ENCODE measurements at regions of chr9 and their contacts with region 1.

Region 1: DNA sequence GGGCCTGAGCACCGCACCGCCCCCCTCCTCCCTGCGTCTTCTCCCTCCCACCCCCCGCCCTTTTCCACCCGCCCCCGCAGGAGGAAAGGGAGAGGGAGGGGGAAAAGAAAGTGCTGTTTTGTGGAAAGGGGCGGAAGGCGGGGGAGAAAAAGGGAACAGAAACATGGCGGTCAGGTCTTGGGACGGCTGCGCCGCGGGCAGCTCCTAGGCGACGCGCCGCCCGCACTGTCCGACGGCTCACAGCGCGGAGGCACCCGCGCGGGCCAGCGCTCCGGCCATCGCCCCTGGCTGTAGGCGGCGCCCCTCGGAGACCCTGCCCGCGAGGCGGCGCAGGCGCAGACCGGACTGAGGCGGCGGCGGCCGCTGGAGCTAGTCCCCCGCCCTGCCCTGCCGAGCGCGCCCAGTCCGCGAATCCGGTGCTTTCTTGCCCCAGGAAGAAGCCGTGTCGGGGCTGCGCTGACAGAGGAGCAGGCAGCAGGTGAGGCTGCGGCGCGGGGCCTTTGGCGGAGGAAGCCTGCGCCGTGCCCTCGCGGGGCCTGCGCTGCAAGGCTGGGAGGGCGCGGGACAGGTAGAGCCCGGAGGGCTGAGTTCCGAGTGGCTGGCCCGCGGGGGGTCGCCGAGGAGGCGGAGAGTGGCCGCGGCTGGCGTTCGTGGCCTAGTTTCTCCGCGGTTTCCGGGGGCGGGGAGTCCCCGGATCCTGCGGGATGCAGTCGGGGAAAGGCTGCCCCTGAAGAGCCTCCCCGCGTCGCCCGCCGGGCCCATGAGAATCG is at the start of gene DENND4C:
- DNase-seq: peak; percentile 85 to 87 (median 85)
- H3K4me3 ChIP-seq: peak within 1 kb of the TSS; percentile 53 to 73
- H3K4me3 Mint-ChIP-seq: peak within 1 kb of the TSS in 6 of 8 donors; percentile 82 to 89 (median 88)
- H3K27ac ChIP-seq: peak within 1 kb of the TSS; percentile 73
- H3K27ac Mint-ChIP-seq: peak within 1 kb of the TSS in 6 of 7 donors; percentile 62 to 93 (median 90)
- H3K4me1 ChIP-seq: peaks cover 25% of the 10 kb centered on the region
- H3K4me1 Mint-ChIP-seq: peaks cover 5 to 11% (median 9%) of the 10 kb centered on the region in 4 donors
- H3K27me3 ChIP-seq: no peaks in the 10 kb centered on the region
- H3K27me3 Mint-ChIP-seq: no peaks in the 10 kb centered on the region
- total RNA-seq, gene DENND4C: 69.0 to 71.8 TPM

Region 2: DNA sequence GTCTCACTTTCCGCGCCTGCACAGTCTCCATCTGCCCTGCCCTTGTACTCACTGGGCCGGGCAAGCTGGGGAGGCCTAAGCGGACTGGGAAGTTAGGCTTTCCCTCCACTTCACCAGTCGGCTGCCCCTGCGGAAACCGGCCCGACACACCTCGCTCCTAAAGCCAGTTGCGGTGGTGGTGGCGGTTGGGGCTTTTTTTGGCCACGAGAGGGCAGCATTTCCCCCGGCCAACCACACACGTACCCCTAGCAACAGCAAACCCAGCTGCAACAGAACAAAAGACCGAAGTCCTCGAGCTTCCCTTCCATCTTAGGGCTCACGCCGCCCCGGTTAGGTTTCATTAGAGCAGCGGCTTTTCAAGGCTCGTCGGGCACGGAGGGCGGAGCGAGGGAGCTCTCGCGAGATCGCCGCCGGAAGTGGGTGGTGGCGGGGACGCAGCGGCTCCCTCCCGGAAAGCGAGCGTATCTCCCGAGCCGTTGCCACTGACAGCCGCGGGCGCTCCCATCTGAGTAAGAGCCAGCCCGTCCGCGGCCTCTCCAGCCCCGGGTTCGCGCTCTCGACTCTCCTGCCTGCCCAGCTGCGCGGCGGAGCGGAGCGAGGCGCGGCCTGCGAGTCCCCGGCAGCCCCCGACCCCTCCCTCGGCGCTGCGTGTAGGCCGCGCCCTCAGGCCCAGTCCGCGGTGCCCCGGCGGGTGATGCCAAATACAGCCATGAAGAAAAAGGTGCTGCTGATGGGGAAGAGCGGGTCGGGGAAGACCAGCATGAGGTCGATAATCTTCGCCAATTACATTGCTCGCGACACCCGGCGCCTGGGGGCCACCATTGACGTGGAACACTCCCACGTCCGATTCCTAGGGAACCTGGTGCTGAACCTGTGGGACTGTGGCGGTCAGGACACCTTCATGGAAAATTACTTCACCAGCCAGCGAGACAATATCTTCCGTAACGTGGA is 181.3 kb before region 1 on chr9 and contains the start of gene RRAGA:
- CTCF ChIA-PET with region 1: interaction called, 3 read pairs
- POLR2A ChIA-PET with region 1: interaction called, 13 read pairs
- intact Hi-C with region 1: loop called (anchors 1 kb)
- DNase-seq: peak; percentile 94 to 96 (median 95)
- H3K4me3 ChIP-seq: peak within 1 kb of the TSS; percentile 84 to 96
- H3K4me3 Mint-ChIP-seq: peak within 1 kb of the TSS; percentile 91 to 99 (median 96)
- H3K27ac ChIP-seq: peak within 1 kb of the TSS; percentile 87
- H3K27ac Mint-ChIP-seq: peak within 1 kb of the TSS; percentile 96 to 100 (median 99)
- H3K4me1 ChIP-seq: peaks cover 39% of the 10 kb centered on the region
- H3K4me1 Mint-ChIP-seq: peaks cover 21 to 56% (median 40%) of the 10 kb centered on the region in 4 donors
- H3K27me3 ChIP-seq: no peaks in the 10 kb centered on the region
- H3K27me3 Mint-ChIP-seq: no peaks in the 10 kb centered on the region
- total RNA-seq, gene RRAGA: 57.4 to 58.0 TPM

Region 3: DNA sequence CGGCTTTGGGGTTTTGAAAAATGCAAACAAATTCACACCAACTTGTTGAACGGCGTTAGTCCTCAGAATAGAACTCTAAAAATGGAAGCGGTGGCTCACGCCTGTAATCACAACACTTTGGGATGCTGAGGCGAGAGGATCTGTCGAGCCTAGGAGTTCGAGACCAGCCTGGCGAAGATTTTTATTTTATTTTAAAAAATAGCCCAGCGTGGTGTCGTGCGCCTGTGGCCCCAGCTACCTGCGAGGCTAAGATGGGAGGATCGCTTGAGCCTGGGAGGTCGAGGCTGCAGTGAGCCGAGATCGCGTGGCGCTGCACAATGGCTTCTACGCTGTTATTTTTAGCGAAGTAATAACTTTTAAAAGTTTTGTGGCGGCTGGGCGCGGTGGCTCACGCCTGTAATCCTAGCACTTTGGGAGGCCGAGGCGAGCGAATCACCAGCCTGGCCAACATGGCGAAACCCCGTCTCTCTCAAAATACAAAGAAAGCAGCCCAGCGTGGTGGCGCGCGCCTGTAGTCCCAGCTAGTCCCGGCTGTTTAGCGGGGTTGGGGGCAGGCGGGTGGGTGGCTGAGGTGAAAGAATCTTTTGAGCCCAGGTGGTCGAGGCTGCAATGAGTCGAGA is 102.5 kb before region 1 on chr9:
- CTCF ChIA-PET with region 1: no interaction called
- POLR2A ChIA-PET with region 1: interaction called, 7 read pairs
- intact Hi-C with region 1: loop called (anchors 1 kb)
- DNase-seq: peak in 3 of 5 donors; percentile 36 to 52 (median 37)
- H3K4me3 ChIP-seq: peak overlapping the region; percentile 57 to 79
- H3K4me3 Mint-ChIP-seq: peak overlapping the region; percentile 92 to 98 (median 96)
- H3K27ac ChIP-seq: peak overlapping the region; percentile 73
- H3K27ac Mint-ChIP-seq: peak overlapping the region; percentile 90 to 96 (median 94)
- H3K4me1 ChIP-seq: peaks cover 61% of the 10 kb centered on the region
- H3K4me1 Mint-ChIP-seq: peaks cover 38 to 63% (median 48%) of the 10 kb centered on the region in 4 donors
- H3K27me3 ChIP-seq: no peaks in the 10 kb centered on the region
- H3K27me3 Mint-ChIP-seq: no peaks in the 10 kb centered on the region

Region 4: DNA sequence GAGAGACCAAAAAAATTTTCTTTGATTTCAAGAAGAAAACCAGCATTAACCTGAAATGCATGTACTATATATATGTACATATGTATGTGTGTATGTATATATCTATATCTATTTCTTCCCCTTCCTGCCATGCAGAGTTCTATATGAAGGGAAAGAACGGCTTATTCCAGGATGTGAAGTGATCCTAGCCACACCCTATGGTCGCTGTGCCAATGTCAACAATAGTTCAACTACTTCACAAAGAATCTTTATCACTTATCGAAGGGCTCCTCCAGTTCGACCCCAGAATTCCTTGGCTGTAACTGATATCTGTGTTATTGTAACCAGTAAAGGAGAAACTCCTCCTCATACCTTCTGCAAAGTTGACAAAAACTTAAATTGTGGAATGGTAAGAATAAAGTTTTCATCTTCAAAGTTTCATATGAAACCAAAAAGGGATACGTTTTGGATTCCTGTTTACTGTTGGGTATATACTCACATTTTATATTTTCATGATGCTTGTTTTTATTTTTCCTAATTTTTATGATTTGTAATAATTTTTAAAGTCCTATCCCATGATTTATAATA is 56.2 kb after region 1 on chr9:
- CTCF ChIA-PET with region 1: no interaction called
- POLR2A ChIA-PET with region 1: interaction called, 3 read pairs
- intact Hi-C with region 1: loop called (anchors 2 kb)
- DNase-seq: no peak
- H3K4me3 ChIP-seq: no peak overlapping the region
- H3K4me3 Mint-ChIP-seq: no peak overlapping the region
- H3K27ac ChIP-seq: no peak overlapping the region
- H3K27ac Mint-ChIP-seq: no peak overlapping the region
- H3K4me1 ChIP-seq: peaks cover 6% of the 10 kb centered on the region
- H3K4me1 Mint-ChIP-seq: peaks cover 18 to 34% (median 23%) of the 10 kb centered on the region in 4 donors
- H3K27me3 ChIP-seq: no peaks in the 10 kb centered on the region
- H3K27me3 Mint-ChIP-seq: no peaks in the 10 kb centered on the region

Region 5: GRCh38 chr9:19379697-19380046 is 149.1 kb after region 1 on chr9:
- CTCF ChIA-PET with region 1: no interaction called
- POLR2A ChIA-PET with region 1: interaction called, 49 read pairs
- intact Hi-C with region 1: loop called (anchors 1 kb)
- DNase-seq: peak in 1 of 5 donors; percentile 63
- H3K4me3 ChIP-seq: peak overlapping the region; percentile 64 to 71
- H3K4me3 Mint-ChIP-seq: peak overlapping the region; percentile 97 to 99 (median 98)
- H3K27ac ChIP-seq: peak overlapping the region; percentile 83
- H3K27ac Mint-ChIP-seq: peak overlapping the region; percentile 96 to 100 (median 99)
- H3K4me1 ChIP-seq: peaks cover 36% of the 10 kb centered on the region
- H3K4me1 Mint-ChIP-seq: peaks cover 36 to 44% (median 40%) of the 10 kb centered on the region in 4 donors
- H3K27me3 ChIP-seq: no peaks in the 10 kb centered on the region
- H3K27me3 Mint-ChIP-seq: no peaks in the 10 kb centered on the region

Region 6: GRCh38 chr9:19464764-19465585 is 234.4 kb after region 1 on chr9:
- CTCF ChIA-PET with region 1: interaction called, 14 read pairs
- POLR2A ChIA-PET with region 1: interaction called, 4 read pairs
- intact Hi-C with region 1: no loop called
- DNase-seq: peak; percentile 61 to 79 (median 74)
- H3K4me3 ChIP-seq: peak overlapping the region in 1 of 2 donors; percentile 35
- H3K4me3 Mint-ChIP-seq: peak overlapping the region; percentile 84 to 98 (median 88)
- H3K27ac ChIP-seq: no peak overlapping the region
- H3K27ac Mint-ChIP-seq: peak overlapping the region in 3 of 7 donors; percentile 46 to 89 (median 80)
- H3K4me1 ChIP-seq: peaks cover 9% of the 10 kb centered on the region
- H3K4me1 Mint-ChIP-seq: peaks cover 7 to 14% (median 11%) of the 10 kb centered on the region in 4 donors
- H3K27me3 ChIP-seq: no peaks in the 10 kb centered on the region
- H3K27me3 Mint-ChIP-seq: no peaks in the 10 kb centered on the region